Activated CD4-positive, alpha-beta memory T cell treated with anti-CD3 and anti-CD28 coated beads for 36 hours (primary cell): ENCODE measurements at regions of chr17 and their contacts with region 1.

Region 1: DNA sequence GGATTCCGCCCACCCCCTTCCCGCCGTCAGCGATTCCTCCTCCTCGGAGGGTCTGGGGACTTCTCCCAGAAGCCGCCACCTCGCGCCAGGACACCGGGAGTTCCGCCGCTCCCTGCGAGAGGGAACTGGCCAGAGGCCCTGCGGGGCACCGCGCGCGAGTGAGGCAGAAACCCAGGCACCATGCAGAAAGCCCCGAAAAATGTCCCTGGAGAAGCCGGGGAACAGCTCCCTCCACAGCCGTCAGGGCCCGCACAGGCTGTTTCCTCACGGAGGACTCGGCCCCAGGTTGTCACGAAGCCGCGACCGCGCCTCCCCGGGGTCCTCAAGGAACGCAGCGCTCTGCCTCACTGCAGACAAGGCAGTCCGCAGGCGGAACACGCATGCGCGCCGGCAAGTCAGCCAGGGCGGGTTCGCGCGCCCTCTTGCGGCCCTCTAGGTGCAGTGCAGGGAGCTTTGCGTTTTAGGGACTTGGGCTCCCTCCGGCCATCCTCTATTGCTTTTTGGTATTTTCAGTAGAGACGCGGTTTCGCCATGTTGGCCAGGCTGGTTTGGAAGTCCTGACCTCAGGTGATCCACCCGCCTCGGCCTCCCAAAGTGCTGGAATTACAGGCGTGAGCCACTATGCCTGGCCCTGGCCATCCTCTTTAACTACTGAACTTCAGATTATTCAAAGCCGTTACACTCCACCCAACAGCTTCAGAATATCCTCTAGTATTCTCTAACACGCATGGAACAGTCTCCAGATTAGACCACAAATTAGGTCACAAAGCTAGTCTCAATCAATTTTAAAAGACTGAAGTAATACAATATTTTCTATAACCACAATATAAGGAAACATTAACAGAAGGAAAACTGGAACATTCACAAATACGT is 20.3 kb upstream of the ZNF287 start:
- DNase-seq: peak; percentile 95
- H3K4me3 Mint-ChIP-seq: peak overlapping the region; percentile 67
- H3K27ac Mint-ChIP-seq: no peak overlapping the region
- H3K4me1 Mint-ChIP-seq: peaks cover 3% of the 10 kb centered on the region
- H3K27me3 Mint-ChIP-seq: peaks cover 20% of the 10 kb centered on the region

Region 2: DNA sequence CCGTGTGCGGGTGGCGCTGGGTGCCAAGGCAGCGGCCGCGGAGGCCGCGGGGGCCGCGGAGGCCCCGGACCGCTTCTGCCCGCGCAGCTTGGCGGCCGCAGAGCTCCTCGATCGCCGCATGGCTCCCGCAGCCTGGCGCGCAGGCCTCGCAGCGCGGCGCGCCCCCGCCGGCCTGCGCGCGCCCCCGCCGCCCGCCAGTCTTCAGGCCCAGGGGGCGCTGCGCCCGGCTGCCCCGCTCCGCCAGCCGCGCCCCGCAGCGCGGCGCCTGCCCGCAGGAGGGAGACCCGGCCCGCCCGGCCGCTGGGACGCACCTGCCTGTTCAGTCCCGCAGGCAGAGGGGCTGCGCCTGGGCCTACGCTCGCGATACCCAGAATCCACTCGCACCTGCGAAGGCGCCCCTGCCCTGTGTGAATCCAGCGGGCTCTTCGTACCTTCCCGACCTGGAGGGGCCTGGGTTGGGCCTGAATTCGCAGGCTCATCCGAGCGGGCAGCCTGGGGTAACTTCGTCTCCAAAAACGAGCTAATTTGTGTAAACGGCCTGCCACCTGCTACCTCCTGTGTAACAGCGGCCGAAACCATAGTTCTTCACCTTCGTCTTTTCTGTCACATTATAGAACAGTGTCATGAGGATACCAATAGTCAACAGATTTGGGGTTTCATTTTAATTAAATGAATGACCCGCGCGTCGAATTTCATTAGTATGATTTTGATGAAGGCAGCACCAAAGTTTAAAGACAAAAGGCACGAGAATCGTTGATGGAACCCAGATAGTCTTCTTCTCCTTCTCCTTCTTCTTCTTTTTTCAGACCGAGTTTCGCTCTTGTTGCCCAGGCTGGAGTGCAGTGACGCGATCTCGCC is 235.8 kb before region 1 on chr17 and contains the start of gene CENPV:
- CTCF ChIA-PET with region 1: interaction called, 4 read pairs
- POLR2A ChIA-PET with region 1: no interaction called
- intact Hi-C with region 1: loop called (anchors 2 kb)
- DNase-seq: peak; percentile 69
- H3K4me3 Mint-ChIP-seq: peak within 1 kb of the TSS; percentile 87
- H3K27ac Mint-ChIP-seq: peak within 1 kb of the TSS; percentile 28
- H3K4me1 Mint-ChIP-seq: peaks cover 22% of the 10 kb centered on the region
- H3K27me3 Mint-ChIP-seq: no peaks in the 10 kb centered on the region
- total RNA-seq, gene CENPV: 43.0 to 44.2 TPM

Region 3: DNA sequence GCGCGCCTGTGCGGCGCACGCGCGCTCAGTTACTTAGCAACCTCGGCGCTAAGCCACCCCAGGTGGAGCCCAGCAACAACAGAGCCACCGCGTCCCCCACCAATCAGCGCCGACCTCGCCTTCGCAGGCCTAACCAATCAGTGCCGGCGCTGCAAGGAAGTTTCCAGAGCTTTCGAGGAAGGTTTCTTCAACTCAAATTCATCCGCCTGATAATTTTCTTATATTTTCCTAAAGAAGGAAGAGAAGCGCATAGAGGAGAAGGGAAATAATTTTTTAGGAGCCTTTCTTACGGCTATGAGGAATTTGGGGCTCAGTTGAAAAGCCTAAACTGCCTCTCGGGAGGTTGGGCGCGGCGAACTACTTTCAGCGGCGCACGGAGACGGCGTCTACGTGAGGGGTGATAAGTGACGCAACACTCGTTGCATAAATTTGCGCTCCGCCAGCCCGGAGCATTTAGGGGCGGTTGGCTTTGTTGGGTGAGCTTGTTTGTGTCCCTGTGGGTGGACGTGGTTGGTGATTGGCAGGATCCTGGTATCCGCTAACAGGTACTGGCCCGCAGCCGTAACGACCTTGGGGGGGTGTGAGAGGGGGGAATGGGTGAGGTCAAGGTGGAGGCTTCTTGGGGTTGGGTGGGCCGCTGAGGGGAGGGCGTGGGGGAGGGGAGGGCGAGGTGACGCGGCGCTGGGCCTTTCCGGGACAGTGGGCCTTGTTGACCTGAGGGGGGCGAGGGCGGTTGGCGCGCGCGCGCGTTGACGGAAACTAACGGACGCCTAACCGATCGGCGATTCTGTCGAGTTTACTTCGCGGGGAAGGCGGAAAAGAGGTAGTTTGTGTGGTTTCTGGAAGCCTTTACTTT is 208.5 kb before region 1 on chr17 and contains the start of gene UBB:
- CTCF ChIA-PET with region 1: interaction called, 3 read pairs
- POLR2A ChIA-PET with region 1: no interaction called
- intact Hi-C with region 1: loop called (anchors 10 kb)
- DNase-seq: peak; percentile 98
- H3K4me3 Mint-ChIP-seq: peak within 1 kb of the TSS; percentile 93
- H3K27ac Mint-ChIP-seq: peak within 1 kb of the TSS; percentile 99
- H3K4me1 Mint-ChIP-seq: peaks cover 40% of the 10 kb centered on the region
- H3K27me3 Mint-ChIP-seq: no peaks in the 10 kb centered on the region
- total RNA-seq, gene UBB: 1,695 to 1,771 TPM

Region 4: GRCh38 chr17:16449121-16449570 is 140.2 kb before region 1 on chr17:
- CTCF ChIA-PET with region 1: interaction called, 10 read pairs
- POLR2A ChIA-PET with region 1: interaction called, 3 read pairs
- intact Hi-C with region 1: no loop called
- DNase-seq: peak; percentile 29
- H3K4me3 Mint-ChIP-seq: no peak overlapping the region
- H3K27ac Mint-ChIP-seq: no peak overlapping the region
- H3K4me1 Mint-ChIP-seq: peaks cover 42% of the 10 kb centered on the region
- H3K27me3 Mint-ChIP-seq: no peaks in the 10 kb centered on the region

Region 5: GRCh38 chr17:16537130-16537458 is 52.2 kb before region 1 on chr17:
- CTCF ChIA-PET with region 1: interaction called, 41 read pairs
- POLR2A ChIA-PET with region 1: interaction called, 7 read pairs
- intact Hi-C with region 1: loop called (anchors 1 kb)
- DNase-seq: no peak
- H3K4me3 Mint-ChIP-seq: no peak overlapping the region
- H3K27ac Mint-ChIP-seq: no peak overlapping the region
- H3K4me1 Mint-ChIP-seq: peaks cover 14% of the 10 kb centered on the region
- H3K27me3 Mint-ChIP-seq: peaks cover 2% of the 10 kb centered on the region

Region 6: GRCh38 chr17:16568541-16569357 is 20.6 kb before region 1 on chr17 and contains the start of gene ZNF287:
- CTCF ChIA-PET with region 1: interaction called, 30 read pairs
- POLR2A ChIA-PET with region 1: interaction called, 5 read pairs
- intact Hi-C with region 1: loop called (anchors 1 kb)
- DNase-seq: peak; percentile 94
- H3K4me3 Mint-ChIP-seq: peak within 1 kb of the TSS; percentile 84
- H3K27ac Mint-ChIP-seq: peak within 1 kb of the TSS; percentile 65
- H3K4me1 Mint-ChIP-seq: peaks cover 15% of the 10 kb centered on the region
- H3K27me3 Mint-ChIP-seq: no peaks in the 10 kb centered on the region
- total RNA-seq, gene ZNF287: 11.1 to 11.5 TPM

Region 7: GRCh38 chr17:16599537-16599936 is 10.2 kb after region 1 on chr17:
- CTCF ChIA-PET with region 1: no interaction called
- POLR2A ChIA-PET with region 1: no interaction called
- intact Hi-C with region 1: no loop called
- DNase-seq: no peak
- H3K4me3 Mint-ChIP-seq: no peak overlapping the region
- H3K27ac Mint-ChIP-seq: no peak overlapping the region
- H3K4me1 Mint-ChIP-seq: no peaks in the 10 kb centered on the region
- H3K27me3 Mint-ChIP-seq: peaks cover 1% of the 10 kb centered on the region

Region 8: DNA sequence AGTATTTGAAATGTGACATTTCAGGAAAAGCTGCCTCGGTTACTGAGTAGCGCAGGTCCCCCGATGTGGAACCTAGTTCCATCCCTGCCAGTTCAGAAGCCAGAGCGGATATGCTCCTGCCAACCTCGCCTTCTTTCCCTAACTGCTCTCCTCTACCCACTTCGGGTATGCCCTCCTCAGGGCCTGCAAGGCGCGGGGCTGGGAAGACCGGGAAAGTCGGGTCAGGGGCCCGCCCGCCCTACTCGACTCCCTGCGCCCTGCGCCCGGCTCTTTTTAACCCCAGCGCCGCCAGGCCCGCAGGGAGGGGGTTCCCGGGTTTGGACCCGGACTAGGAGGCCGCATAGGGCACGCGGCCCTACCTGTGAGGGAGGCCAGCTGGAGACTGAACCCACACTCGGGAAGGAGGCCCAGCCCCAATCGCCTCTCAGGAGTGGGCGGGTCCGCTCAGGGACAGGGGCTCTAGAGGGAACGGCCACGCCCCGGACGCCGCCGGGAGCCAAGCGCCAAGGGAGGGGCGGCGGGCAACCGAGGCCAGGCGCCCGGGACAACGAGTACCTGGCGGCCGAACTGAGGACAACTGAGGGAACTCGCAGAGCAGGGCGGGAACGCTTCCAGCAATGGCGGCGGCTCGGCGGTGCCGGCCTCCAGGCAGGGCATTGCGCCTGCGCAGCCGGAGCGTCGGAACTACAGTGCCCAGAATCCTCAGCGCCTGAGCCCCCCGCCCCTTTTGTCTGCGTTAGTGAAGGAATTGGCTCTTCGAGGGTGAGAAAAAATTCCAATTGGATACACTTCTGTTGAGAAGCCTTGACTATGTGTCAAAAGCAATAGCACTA is 64.1 kb after region 1 on chr17 and contains the start of gene ZNF624:
- CTCF ChIA-PET with region 1: interaction called, 4 read pairs
- POLR2A ChIA-PET with region 1: no interaction called
- intact Hi-C with region 1: loop called (anchors 1 kb)
- DNase-seq: peak; percentile 92
- H3K4me3 Mint-ChIP-seq: peak within 1 kb of the TSS; percentile 81
- H3K27ac Mint-ChIP-seq: peak within 1 kb of the TSS; percentile 33
- H3K4me1 Mint-ChIP-seq: peaks cover 13% of the 10 kb centered on the region
- H3K27me3 Mint-ChIP-seq: peaks cover 3% of the 10 kb centered on the region
- total RNA-seq, gene ZNF624: 3.9 to 5.0 TPM

Region 9: GRCh38 chr17:16900288-16900882 is 311.1 kb after region 1 on chr17:
- CTCF ChIA-PET with region 1: no interaction called
- POLR2A ChIA-PET with region 1: no interaction called
- intact Hi-C with region 1: no loop called
- DNase-seq: no peak
- H3K4me3 Mint-ChIP-seq: no peak overlapping the region
- H3K27ac Mint-ChIP-seq: no peak overlapping the region
- H3K4me1 Mint-ChIP-seq: no peaks in the 10 kb centered on the region
- H3K27me3 Mint-ChIP-seq: peaks cover 40% of the 10 kb centered on the region